Transverse colon (tissue), 4 donors: ENCODE measurements at regions of chr18 and their contacts with region 1.

Region 1: DNA sequence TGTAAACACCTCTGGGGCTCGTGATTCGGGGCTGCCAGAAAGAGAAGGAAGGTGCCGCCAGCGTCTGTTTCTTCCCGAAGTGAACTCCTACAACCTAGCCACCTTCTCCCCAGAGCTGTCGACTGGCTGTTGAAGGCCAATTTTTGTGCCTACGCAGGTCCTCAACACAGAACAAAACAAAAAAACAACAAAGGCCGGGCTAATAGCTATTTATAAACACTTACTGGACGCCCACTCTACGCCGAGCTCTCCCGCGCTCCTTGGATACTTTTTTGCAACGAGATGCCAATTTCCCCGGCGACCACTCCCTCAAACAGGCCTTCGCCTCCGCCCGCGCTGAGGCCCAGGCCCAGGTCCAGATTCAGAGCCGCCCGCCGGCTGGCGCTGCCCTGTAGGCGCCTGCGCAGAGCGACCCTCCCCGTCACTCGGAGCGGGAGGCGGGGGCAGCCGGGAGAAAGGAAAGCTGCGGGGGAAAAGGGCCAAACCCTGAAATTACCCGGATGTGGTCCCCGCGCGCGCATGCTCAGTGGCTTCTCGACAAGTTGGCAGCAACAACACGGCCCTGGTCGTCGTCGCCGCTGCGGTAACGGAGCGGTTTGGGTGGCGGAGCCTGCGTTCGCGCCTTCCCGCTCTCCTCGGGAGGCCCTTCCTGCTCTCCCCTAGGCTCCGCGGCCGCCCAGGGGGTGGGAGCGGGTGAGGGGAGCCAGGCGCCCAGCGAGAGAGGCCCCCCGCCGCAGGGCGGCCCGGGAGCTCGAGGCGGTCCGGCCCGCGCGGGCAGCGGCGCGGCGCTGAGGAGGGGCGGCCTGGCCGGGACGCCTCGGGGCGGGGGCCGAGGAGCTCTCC is at the start of gene SMAD4:
- DNase-seq: peak; percentile 98
- H3K4me3 ChIP-seq: peak within 1 kb of the TSS; percentile 87 to 90 (median 88)
- H3K27ac ChIP-seq: peak within 1 kb of the TSS; percentile 97 to 99 (median 98)
- H3K4me1 ChIP-seq: peaks cover 13 to 61% (median 35%) of the 10 kb centered on the region in 4 donors
- H3K27me3 ChIP-seq: no peaks in the 10 kb centered on the region
- CTCF ChIP-seq: no peak
- EP300 ChIP-seq: no peak
- POLR2A ChIP-seq: peak; percentile 95
- total RNA-seq, gene SMAD4: 77.1 to 172 (median 85.6) TPM

Region 2: DNA sequence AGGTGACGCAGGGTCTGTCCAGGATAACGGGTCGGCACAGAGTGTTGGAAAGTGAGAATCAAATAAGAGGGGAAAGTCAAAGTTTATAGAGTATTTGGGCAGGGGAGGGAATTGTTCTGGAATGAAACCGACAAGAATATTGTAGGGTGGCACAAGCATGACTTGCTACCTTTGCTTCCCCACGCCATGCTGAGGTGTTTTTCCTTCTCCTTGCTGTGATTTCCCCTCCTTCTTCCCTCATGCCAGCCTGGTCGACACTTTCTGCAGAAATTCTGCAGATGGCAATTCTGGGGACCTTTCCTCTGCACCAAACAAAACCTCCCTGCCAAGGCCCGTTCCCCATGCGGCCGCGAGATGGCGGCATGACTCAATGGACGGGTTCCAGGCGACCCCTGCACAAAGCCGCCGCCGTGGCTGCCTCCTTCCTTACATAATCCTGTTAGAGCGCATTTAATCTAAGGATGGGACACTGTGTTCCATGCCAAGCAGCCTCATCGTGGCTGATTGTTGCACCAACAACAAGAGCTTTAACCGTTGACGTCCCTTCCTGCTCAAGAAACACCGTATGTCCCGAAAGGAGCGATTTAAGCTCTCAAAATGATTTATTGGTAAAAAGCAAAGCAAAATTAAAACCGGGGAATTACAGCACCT is 210.1 kb before region 1 on chr18 and contains the start of gene MRO:
- in situ Hi-C with region 1: loop called in 2 of 4 experiments (anchors 25 kb)
- intact Hi-C with region 1: loop called (anchors 10 kb)
- DNase-seq: peak; percentile 88
- H3K4me3 ChIP-seq: peak within 1 kb of the TSS; percentile 1 to 50 (median 24)
- H3K27ac ChIP-seq: peak within 1 kb of the TSS in 3 of 4 donors; percentile 8 to 34 (median 9)
- H3K4me1 ChIP-seq: peaks cover 8 to 24% (median 20%) of the 10 kb centered on the region in 4 donors
- H3K27me3 ChIP-seq: no peaks in the 10 kb centered on the region
- CTCF ChIP-seq: peak; percentile 88 to 94 (median 92)
- EP300 ChIP-seq: peak; percentile 32
- POLR2A ChIP-seq: no peak
- total RNA-seq, gene MRO: 0.16 to 0.27 TPM in 2 of 4 donors, not detected in the others

Region 3: DNA sequence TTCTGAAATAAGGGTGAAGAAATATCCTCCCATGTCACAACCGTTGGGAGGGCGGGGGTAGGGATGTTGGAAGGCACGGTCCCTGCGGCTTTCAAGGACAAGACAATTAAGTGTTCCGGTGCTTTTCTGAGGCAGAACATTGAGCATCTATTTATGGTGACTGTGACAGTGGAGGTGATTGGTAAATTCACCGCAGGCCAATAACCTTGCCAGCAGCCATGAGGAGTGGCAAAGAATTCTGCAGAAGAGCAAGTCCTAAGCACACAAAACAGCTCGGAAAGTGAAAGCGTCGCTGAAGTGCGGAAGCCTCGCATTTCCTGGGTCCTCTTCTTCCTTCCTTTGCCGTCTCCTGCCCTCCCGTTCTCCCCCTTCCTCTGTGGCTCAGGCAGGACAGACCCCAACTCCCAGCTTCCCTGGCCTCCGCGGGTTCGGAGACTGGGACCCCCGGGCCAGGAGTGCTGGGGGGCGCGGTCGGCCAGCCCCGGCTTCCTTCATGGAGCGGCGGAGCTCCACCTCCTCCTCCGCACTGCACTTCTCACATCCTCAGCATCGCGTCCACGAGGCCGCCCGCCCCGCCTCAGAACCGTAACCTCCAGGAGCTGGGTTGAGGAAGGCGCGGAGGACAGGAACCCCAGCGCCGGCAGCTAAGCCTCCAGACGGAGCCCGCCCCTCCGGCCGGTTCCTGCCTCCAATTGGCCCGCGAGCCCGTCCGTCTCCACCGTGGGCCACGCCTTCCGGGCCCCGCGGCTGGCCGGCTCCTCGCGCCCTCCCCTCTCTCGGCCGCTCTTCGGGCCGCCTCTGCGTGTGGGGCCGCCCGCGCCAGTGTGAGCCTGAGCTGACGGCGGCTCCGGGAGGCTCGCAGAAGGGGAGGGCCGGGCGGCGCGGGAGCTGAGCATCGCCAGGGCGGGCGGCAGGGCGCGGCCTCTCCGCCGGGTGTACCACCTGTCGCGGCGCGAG is 151.3 kb before region 1 on chr18 and contains the start of gene ME2:
- in situ Hi-C with region 1: loop called in 1 of 4 experiments (anchors 25 kb)
- intact Hi-C with region 1: no loop called
- DNase-seq: peak; percentile 95
- H3K4me3 ChIP-seq: peak within 1 kb of the TSS; percentile 71 to 89 (median 80)
- H3K27ac ChIP-seq: peak within 1 kb of the TSS; percentile 98 to 100 (median 99)
- H3K4me1 ChIP-seq: peaks cover 0 to 44% (median 26%) of the 10 kb centered on the region in 4 donors
- H3K27me3 ChIP-seq: no peaks in the 10 kb centered on the region
- CTCF ChIP-seq: no peak
- EP300 ChIP-seq: no peak
- POLR2A ChIP-seq: peak; percentile 92
- total RNA-seq, gene ME2: 28.8 to 84.5 (median 53.2) TPM

Region 4: GRCh38 chr18:50967714-50968661 is 61.9 kb before region 1 on chr18 and contains the start of gene ELAC1:
- in situ Hi-C with region 1: no loop called
- intact Hi-C with region 1: loop called (anchors 1 kb)
- DNase-seq: peak; percentile 81
- H3K4me3 ChIP-seq: peak within 1 kb of the TSS; percentile 73 to 98 (median 90)
- H3K27ac ChIP-seq: peak within 1 kb of the TSS; percentile 95 to 99 (median 98)
- H3K4me1 ChIP-seq: peaks cover 8 to 25% (median 14%) of the 10 kb centered on the region in 4 donors
- H3K27me3 ChIP-seq: no peaks in the 10 kb centered on the region
- CTCF ChIP-seq: no peak
- EP300 ChIP-seq: no peak
- POLR2A ChIP-seq: peak; percentile 86
- total RNA-seq, gene ELAC1: 3.2 to 9.6 (median 6.4) TPM in 3 of 4 donors, not detected in the other